ENCODE measurements at regions of chr18 and their contacts with region 1.

Region 1: DNA sequence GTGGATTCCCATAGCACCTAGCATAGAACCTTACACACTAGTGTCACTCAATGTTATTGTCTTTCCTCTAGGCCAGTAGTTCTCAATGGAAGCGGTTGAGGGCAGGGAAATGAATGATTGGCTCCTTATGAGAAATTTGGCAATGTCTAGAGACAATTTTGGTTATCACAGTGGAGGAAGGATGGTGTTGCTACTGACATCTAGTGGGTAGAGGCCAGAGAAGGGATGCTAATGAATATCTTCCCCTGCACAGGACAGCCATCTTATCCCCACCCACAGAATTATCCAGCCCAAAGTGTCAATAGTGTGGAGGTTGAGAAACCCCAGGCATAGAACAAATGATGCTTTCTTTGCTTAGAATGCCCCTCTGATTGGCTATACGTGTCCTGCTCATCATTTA is 15.8 kb downstream of the C18orf63 start:
- DNase-seq: no peak
- ATAC-seq: peak in 1 of 2 donors; percentile 56
- H3K4me3 ChIP-seq: no peak overlapping the region
- H3K27ac ChIP-seq: no peak overlapping the region
- H3K4me1 ChIP-seq: no peaks in the 10 kb centered on the region
- H3K27me3 ChIP-seq: no peaks in the 10 kb centered on the region

Region 2: DNA sequence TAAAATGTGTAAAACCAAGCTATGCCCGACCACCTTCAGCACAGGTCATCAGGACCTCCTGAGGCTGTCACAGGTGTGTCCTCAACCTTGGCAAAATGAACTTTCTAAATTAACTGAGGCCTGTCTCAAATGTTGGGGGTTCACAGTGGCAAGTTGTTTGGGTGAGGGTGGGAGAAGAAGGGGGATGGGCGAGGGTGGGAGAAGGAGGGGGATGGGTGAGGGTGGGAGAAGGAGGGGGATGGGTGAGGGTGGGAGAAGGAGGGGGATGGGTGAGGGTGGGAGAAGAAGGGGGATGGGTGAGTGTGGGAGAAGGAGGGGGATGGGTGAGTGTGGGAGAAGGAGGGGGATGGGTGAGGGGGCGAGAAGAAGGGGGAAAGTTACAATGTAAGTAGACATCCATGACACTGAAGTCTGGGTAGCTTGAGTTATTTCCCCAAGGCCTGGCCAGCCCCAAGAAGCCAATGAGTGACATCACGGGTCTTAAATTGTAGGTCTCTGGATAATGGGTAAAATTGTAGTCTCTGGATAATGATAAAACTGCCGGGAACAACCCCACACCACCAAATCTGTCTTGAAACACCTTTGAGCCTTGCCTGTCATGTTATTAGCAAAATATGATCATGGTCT is 126.8 kb before region 1 on chr18:
- intact Hi-C with region 1: loop called in 2 of 4 experiments (anchors 5 kb)
- DNase-seq: no peak
- ATAC-seq: no peak
- H3K4me3 ChIP-seq: no peak overlapping the region
- H3K27ac ChIP-seq: no peak overlapping the region
- H3K4me1 ChIP-seq: no peaks in the 10 kb centered on the region
- H3K27me3 ChIP-seq: no peaks in the 10 kb centered on the region

Region 3: GRCh38 chr18:74242438-74243096 is 88.8 kb before region 1 on chr18:
- intact Hi-C with region 1: loop called in 3 of 4 experiments (anchors 5 to 10 kb)
- DNase-seq: peak in 2 of 3 donors; percentile 30 to 67
- ATAC-seq: peak; percentile 82 to 84
- H3K4me3 ChIP-seq: peak overlapping the region; percentile 38
- H3K27ac ChIP-seq: no peak overlapping the region
- H3K4me1 ChIP-seq: no peaks in the 10 kb centered on the region
- H3K27me3 ChIP-seq: no peaks in the 10 kb centered on the region

Region 4: DNA sequence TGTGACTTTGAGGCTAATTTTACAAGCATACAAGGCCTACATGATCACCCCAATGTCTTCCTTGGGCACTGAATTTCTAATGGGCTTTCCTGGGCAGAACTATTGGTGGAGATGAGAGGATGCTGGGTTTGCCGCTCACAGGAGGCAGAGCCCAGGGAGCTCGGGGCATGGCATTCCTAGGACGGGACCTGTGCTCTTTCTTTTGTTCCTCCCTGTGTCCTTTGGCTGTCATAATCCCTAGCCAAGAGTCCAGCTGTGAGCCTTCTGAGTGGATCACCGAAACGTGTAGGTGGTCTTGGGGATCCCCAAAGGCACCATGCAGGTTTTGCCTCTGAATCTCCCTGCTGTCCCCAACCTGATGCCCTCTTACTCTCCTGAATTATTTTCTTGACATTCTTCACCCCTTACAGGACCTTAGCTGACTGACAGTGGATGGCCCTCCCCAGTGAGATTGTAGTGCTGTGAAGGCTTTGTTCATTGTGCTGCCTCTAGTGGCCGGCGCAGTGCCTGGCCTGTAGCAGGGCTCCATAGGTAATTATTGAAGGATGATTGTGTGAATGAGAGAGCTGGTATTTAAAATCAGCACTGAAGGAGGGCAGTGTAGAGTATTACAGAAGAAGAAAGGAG is 488.1 kb after region 1 on chr18:
- intact Hi-C with region 1: no loop called
- DNase-seq: no peak
- ATAC-seq: no peak
- H3K4me3 ChIP-seq: no peak overlapping the region
- H3K27ac ChIP-seq: no peak overlapping the region
- H3K4me1 ChIP-seq: no peaks in the 10 kb centered on the region
- H3K27me3 ChIP-seq: no peaks in the 10 kb centered on the region

Measured in right cardiac atrium (tissue), 5 donors.